ENCODE measurements at regions of chr5 and their contacts with region 1.

Region 1: GRCh38 chr5:54415896-54416601 is 39.5 kb upstream of the HSPB3 start:
- DNase-seq: peak; percentile 83
- H3K4me3 ChIP-seq: no peak overlapping the region
- H3K27ac ChIP-seq: no peak overlapping the region
- H3K4me1 ChIP-seq: peaks cover 18% of the 10 kb centered on the region
- H3K27me3 ChIP-seq: no peaks in the 10 kb centered on the region
- CTCF ChIP-seq: no peak

Region 2: GRCh38 chr5:54249210-54250028 is 166.6 kb before region 1 on chr5:
- CTCF ChIA-PET with region 1: no interaction called
- dilution Hi-C with region 1: no loop called
- in situ Hi-C with region 1: loop called (anchors 5 to 10 kb)
- intact Hi-C with region 1: no loop called
- DNase-seq: no peak
- H3K4me3 ChIP-seq: no peak overlapping the region
- H3K27ac ChIP-seq: no peak overlapping the region
- H3K4me1 ChIP-seq: no peaks in the 10 kb centered on the region
- H3K27me3 ChIP-seq: no peaks in the 10 kb centered on the region
- CTCF ChIP-seq: no peak

Region 3: GRCh38 chr5:54383225-54383901 is 32.7 kb before region 1 on chr5:
- CTCF ChIA-PET with region 1: interaction called, 7 read pairs
- dilution Hi-C with region 1: no loop called
- in situ Hi-C with region 1: no loop called
- intact Hi-C with region 1: loop called (anchors 1 kb)
- DNase-seq: peak; percentile 39
- H3K4me3 ChIP-seq: no peak overlapping the region
- H3K27ac ChIP-seq: no peak overlapping the region
- H3K4me1 ChIP-seq: peaks cover 16% of the 10 kb centered on the region
- H3K27me3 ChIP-seq: no peaks in the 10 kb centered on the region
- CTCF ChIP-seq: no peak

Region 4: DNA sequence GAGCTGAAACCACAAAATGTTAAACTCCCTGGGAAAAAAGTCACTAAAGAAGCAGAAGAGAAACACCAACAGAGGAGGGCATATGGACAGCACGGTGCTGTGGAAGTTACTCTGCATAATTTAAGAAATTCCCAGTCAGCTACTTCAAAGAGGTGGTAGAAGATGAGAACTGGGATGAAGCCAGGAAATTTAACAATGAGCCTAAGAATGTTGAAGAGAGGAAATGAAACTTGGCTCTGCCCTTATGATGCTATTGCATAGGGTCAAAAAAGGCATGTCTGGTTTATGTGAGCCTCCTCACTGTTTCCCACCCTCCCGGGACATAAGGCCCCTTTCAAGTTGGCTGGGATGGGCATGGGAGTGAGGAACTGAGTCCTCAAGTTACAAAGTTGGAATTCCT is 76.1 kb after region 1 on chr5:
- CTCF ChIA-PET with region 1: no interaction called
- dilution Hi-C with region 1: no loop called
- in situ Hi-C with region 1: no loop called
- intact Hi-C with region 1: loop called (anchors 1 kb)
- DNase-seq: peak; percentile 3
- H3K4me3 ChIP-seq: no peak overlapping the region
- H3K27ac ChIP-seq: no peak overlapping the region
- H3K4me1 ChIP-seq: no peaks in the 10 kb centered on the region
- H3K27me3 ChIP-seq: peaks cover 3% of the 10 kb centered on the region
- CTCF ChIP-seq: no peak

Measured in mammary epithelial cell (primary cell).